Activated T-helper 1 cell treated with anti-CD3 and anti-CD28 coated beads, Interleukin-12 subunit alpha, Interleukin-12 subunit beta, Interleukin-2, Interleukin-4 antibody, amounts not matched to agents 30 ng/mL and 10 ng/mL and 1 ng/mL, durations not matched to agents 14 hours and 24 hours and 36 hours (primary cell): ENCODE measurements at regions of chr18 and their contacts with region 1.

Region 1: DNA sequence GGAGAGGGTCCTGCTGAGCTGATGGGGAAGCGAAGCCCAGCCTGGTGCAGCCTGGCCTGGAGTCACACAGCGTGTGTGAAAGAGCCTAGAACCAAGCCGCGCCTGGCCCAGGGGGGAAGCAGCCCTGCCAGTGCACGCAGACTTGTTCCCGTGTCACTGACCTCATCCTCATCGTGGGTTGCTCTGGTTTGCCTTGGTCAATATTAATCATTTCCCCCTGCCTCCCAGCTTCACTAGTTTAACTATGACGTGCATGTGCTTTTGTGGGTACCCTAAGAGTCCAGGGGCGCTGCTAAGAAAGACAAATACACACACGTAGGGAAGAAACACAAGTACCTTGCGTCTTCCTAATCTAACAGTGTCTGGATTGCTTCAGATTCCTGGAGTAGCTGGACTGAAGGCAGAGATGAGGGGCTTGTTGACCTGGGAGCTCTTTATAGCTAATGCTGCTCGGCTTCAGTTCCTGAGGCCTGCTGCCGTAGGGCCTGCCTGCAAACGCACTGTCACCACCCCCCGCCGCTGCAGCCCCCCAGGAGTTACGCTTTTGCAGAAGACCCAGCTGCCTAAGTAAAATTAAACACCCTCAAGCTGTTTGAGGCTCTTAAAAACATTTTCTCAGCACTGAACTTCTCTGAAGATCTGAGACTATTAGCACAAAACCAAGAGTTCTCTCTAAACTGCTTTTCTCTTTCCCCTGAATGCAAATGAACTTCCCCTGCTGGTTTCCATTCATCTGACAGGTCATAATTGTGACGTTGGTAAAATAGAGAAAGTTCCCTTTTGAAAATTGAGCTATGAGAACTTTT is 159.2 kb downstream of the FAM210A start:
- DNase-seq: no peak
- H3K4me3 Mint-ChIP-seq: peak overlapping the region; percentile 61
- H3K27ac Mint-ChIP-seq: peak overlapping the region; percentile 87
- H3K4me1 Mint-ChIP-seq: peaks cover 72% of the 10 kb centered on the region
- H3K27me3 Mint-ChIP-seq: no peaks in the 10 kb centered on the region

Region 2: DNA sequence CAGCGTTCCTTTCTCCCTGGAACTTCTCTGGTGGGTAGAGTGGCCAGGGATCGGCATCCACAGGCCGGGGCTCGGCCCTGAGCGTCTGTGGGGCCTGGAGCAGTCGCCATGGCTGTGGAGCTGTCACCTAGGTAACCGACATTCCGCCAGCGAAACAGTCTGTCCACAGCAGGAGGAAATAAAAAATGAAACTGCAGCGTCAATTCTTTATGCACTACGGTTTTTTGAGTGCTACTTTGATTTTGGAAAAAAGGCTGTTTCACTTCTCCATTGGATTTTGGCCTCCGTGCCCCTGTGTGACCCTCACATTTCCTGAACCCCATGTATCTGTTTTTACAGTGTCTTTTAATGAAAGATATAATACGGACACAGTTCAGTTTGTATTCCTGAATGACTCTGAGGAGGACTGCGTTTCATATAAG is 185.2 kb before region 1 on chr18:
- intact Hi-C with region 1: loop called (anchors 1 kb)
- DNase-seq: peak; percentile 35
- H3K4me3 Mint-ChIP-seq: peak overlapping the region; percentile 79
- H3K27ac Mint-ChIP-seq: peak overlapping the region; percentile 98
- H3K4me1 Mint-ChIP-seq: peaks cover 53% of the 10 kb centered on the region
- H3K27me3 Mint-ChIP-seq: peaks cover 4% of the 10 kb centered on the region

Region 3: DNA sequence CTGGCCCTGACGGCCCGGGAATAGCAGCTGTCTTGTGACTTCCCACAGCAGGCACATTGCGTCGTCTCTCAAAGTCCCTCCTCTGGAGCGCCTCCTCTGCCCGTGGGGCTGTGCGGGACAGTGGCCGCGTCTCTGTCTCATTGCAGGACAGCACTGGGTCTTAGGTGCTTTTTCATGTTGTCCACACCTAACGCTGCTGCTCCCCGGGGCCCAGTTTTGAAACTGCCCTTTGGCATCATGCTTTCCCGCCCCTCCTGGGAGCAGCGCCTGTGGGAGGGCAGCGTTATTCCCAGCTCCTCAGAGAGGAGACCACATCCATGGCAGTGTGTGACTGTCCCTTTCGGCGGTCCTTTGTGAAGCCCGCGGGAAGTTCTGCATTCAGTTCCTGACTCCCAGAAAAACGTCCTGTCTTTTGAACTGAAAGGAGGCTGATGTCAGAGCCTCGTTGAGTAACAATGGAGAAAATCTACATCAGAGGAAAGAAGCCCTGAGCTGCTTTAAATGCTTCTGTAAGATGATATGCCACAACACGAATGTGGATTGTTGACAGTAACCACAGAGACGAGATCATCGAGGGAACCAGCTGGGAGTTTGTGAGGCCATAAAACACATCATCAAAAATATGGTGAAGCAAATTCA is 66.8 kb before region 1 on chr18:
- intact Hi-C with region 1: loop called (anchors 5 kb)
- DNase-seq: no peak
- H3K4me3 Mint-ChIP-seq: no peak overlapping the region
- H3K27ac Mint-ChIP-seq: no peak overlapping the region
- H3K4me1 Mint-ChIP-seq: peaks cover 32% of the 10 kb centered on the region
- H3K27me3 Mint-ChIP-seq: no peaks in the 10 kb centered on the region

Region 4: GRCh38 chr18:13577091-13577697 is 10.1 kb after region 1 on chr18:
- intact Hi-C with region 1: loop called (anchors 1 kb)
- DNase-seq: peak; percentile 41
- H3K4me3 Mint-ChIP-seq: peak overlapping the region; percentile 67
- H3K27ac Mint-ChIP-seq: peak overlapping the region; percentile 87
- H3K4me1 Mint-ChIP-seq: peaks cover 56% of the 10 kb centered on the region
- H3K27me3 Mint-ChIP-seq: no peaks in the 10 kb centered on the region

Region 5: GRCh38 chr18:13585379-13586153 is 18.4 kb after region 1 on chr18:
- intact Hi-C with region 1: loop called (anchors 1 kb)
- DNase-seq: no peak
- H3K4me3 Mint-ChIP-seq: no peak overlapping the region
- H3K27ac Mint-ChIP-seq: no peak overlapping the region
- H3K4me1 Mint-ChIP-seq: peaks cover 55% of the 10 kb centered on the region
- H3K27me3 Mint-ChIP-seq: no peaks in the 10 kb centered on the region